Head of caudate nucleus (tissue), 42 donors: ENCODE measurements at regions of chr4 and their contacts with region 1.

Region 1: DNA sequence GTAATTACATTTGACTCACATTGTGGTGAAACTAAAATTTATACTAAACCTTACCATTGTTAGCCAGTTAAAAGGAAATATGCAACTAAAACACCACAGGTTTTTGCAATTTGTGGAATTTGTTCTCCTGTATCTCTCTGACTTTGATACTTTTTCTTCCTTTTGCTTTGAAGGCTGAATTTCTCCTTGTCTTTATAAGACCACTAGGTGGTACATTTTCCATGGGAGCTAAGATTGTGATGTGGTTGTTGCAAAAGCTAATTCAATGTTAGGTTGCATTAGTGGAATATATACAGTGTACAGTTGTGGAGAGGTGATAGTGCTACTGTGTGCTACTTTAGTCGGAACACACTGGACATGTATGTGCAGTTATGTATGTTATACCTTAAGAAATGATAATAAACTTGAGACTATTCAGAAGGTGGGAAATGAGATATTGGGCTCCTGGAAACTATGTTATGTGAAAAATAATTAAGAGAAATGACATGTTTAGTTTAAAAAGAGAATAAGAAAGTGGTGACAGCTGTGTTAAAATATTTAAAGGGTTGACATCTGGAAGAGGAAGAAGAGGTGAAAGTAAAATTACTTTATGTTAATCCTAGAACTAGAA is 70.3 kb downstream of the ARL9 start:
- DNase-seq: peak in 2 of 42 donors; percentile 5 to 6

Region 2: DNA sequence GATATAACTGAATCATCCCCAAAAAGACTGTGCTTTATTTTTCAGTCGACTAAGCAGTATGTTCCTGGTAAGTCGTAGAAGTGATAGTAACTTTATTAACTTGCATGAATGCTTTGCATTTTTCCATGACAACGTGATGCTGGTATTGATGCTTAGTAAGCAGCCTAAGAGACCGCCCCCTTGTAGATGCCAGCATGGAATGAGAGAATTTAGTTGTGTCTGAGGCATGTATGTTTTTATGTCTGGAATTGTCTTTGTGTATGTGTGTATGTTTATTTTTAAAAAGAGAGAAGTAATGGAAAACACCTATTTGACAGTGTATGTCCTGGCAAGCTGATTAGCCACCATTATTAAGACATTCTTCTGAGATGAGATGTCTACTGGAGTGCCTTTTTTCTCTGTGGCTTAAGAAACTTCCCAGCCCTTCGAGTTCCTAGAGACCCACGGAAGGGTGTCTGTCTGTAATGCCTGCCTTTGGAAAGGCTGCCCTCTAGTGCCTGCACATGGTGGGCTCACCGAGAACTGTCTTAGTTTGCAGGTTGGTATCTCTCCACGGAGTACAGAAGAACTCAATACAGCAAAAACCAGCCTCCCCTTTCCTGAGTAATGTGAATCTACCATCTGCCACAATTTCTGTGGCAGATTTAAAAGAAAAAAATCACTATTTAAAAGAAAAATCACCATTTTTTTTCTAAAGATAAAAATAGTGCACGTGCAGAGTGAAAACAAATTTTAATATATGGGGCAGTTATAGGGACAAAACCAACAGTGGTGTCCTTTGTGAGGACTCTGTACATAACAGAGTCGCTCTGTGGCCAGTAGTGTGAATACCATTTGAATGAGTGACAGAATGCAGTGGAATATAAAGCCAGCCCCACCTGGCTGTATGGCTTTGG is 274.5 kb before region 1 on chr4:
- intact Hi-C with region 1: no loop called
- DNase-seq: peak; percentile 58 to 93 (median 80)

Region 3: GRCh38 chr4:56641494-56642051 is 65.6 kb after region 1 on chr4:
- intact Hi-C with region 1: no loop called
- DNase-seq: peak in 1 of 42 donors; percentile 8

Region 4: DNA sequence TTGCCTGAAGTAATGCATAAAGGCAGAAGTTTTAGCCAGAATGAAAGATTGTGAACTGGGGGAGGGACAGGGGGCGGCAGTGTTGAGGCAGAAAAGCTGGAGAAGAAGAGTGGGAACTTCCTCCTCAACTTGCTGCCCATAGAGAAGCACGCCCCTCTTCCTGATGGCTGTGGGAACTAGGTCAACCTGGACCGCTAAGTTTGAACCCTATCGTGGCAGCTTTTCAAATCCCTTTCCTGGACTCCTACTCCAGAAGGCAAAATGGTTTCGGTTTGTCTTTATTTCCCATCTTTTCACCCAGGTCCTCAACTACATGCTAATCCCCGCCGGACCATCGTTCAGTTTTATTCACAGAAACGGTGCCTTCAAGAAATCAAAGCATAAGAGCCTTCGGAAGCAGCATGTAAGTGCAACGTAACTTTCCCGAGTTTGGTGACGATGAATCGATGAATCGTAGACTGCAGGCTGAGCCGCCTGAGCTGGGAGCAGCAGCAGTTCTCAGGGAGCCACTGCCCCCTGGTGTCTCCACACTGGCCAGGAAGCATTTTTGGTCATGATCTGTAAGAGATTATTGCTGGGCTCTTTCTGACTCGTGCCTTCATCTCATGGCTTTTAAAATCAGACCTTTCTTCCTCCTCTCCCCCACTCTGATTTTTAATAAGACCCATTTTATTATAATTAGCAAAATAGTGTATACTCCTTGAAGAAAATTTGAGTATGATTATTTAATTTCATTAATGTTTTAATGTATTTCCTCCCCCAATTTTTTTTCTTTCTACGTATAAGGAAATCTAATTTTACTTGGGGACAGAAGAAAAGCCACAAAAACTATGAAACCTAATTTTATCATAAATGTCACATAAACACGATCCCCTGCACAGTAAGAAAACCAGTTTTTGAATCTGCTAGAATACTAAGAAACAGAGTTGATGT is 224.2 kb after region 1 on chr4:
- intact Hi-C with region 1: loop called (anchors 10 kb)
- DNase-seq: peak; percentile 76 to 95 (median 88)